MCF 10A (cell line): ENCODE measurements at regions of chr20 and their contacts with region 1.

Region 1: GRCh38 chr20:35619196-35620095 is 3.8 kb downstream of the SPAG4 start:
- DNase-seq: peak; percentile 91
- H3K4me3 Mint-ChIP-seq: peak overlapping the region; percentile 87
- H3K27ac Mint-ChIP-seq: no peak overlapping the region
- H3K4me1 Mint-ChIP-seq: peaks cover 12% of the 10 kb centered on the region
- H3K27me3 Mint-ChIP-seq: no peaks in the 10 kb centered on the region
- CTCF ChIP-seq: no peak

Region 2: GRCh38 chr20:35511814-35512420 is 107.5 kb before region 1 on chr20:
- CTCF ChIA-PET with region 1: interaction called, 3 read pairs
- POLR2A ChIA-PET with region 1: interaction called, 4 read pairs
- intact Hi-C with region 1: loop called (anchors 10 kb)
- DNase-seq: peak; percentile 51
- H3K4me3 Mint-ChIP-seq: no peak overlapping the region
- H3K27ac Mint-ChIP-seq: no peak overlapping the region
- H3K4me1 Mint-ChIP-seq: peaks cover 13% of the 10 kb centered on the region
- H3K27me3 Mint-ChIP-seq: no peaks in the 10 kb centered on the region
- CTCF ChIP-seq: peak; percentile 67

Region 3: GRCh38 chr20:35629427-35630145 is 10.1 kb after region 1 on chr20:
- CTCF ChIA-PET with region 1: interaction called, 10 read pairs
- POLR2A ChIA-PET with region 1: interaction called, 26 read pairs
- intact Hi-C with region 1: no loop called
- DNase-seq: no peak
- H3K4me3 Mint-ChIP-seq: no peak overlapping the region
- H3K27ac Mint-ChIP-seq: no peak overlapping the region
- H3K4me1 Mint-ChIP-seq: peaks cover 4% of the 10 kb centered on the region
- H3K27me3 Mint-ChIP-seq: no peaks in the 10 kb centered on the region
- CTCF ChIP-seq: no peak

Region 4: GRCh38 chr20:35641743-35642142 is 22.3 kb after region 1 on chr20:
- CTCF ChIA-PET with region 1: interaction called, 4 read pairs
- POLR2A ChIA-PET with region 1: interaction called, 13 read pairs
- intact Hi-C with region 1: no loop called
- DNase-seq: no peak
- H3K4me3 Mint-ChIP-seq: no peak overlapping the region
- H3K27ac Mint-ChIP-seq: no peak overlapping the region
- H3K4me1 Mint-ChIP-seq: peaks cover 11% of the 10 kb centered on the region
- H3K27me3 Mint-ChIP-seq: no peaks in the 10 kb centered on the region
- CTCF ChIP-seq: no peak

Region 5: GRCh38 chr20:35664544-35665221 is 45.2 kb after region 1 on chr20 and contains the starts of genes CPNE1 and RBM12:
- CTCF ChIA-PET with region 1: no interaction called
- POLR2A ChIA-PET with region 1: interaction called, 124 read pairs
- intact Hi-C with region 1: loop called (anchors 5 kb)
- DNase-seq: peak; percentile 90
- H3K4me3 Mint-ChIP-seq: peak within 1 kb of the TSS; percentile 94
- H3K27ac Mint-ChIP-seq: peak within 1 kb of the TSS; percentile 98
- H3K4me1 Mint-ChIP-seq: peaks cover 19% of the 10 kb centered on the region
- H3K27me3 Mint-ChIP-seq: no peaks in the 10 kb centered on the region
- CTCF ChIP-seq: no peak
- total RNA-seq, gene CPNE1: 161 and 194 TPM in 2 replicates
- total RNA-seq, gene RBM12: 60.1 and 64.3 TPM in 2 replicates

Region 6: GRCh38 chr20:35680452-35681183 is 61.2 kb after region 1 on chr20:
- CTCF ChIA-PET with region 1: no interaction called
- POLR2A ChIA-PET with region 1: no interaction called
- intact Hi-C with region 1: no loop called
- DNase-seq: no peak
- H3K4me3 Mint-ChIP-seq: no peak overlapping the region
- H3K27ac Mint-ChIP-seq: no peak overlapping the region
- H3K4me1 Mint-ChIP-seq: no peaks in the 10 kb centered on the region
- H3K27me3 Mint-ChIP-seq: no peaks in the 10 kb centered on the region
- CTCF ChIP-seq: no peak